ENCODE measurements at regions of chr13 and their contacts with region 1.

Region 1: DNA sequence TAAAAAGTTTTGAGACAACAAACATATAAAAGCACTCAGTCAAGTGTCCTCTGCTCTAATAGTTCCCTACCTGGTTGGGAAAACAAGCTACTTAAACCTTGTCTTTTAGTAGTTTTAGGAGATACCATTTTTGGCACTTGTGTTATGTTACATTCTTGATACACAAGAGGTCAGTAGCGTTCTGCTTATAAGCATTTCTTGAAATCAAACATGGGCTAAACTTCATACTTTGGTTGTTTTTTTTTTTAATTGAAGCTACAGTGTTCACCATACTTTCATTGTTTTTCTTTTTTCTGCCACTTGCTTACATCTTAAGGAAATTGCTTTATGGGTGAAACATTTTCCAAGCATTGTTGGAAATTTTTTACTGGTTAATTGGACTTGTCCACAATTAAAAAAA is 12.9 kb downstream of the NHLRC3 start:
- DNase-seq: peak in 1 of 2 experiments; percentile 41
- H3K4me3 ChIP-seq: no peak overlapping the region
- H3K27ac ChIP-seq: no peak overlapping the region
- H3K4me1 ChIP-seq: peaks cover 8% of the 10 kb centered on the region; the same call in 1 of the 2 replicates
- H3K27me3 ChIP-seq: no peaks in the 10 kb centered on the region
- CTCF ChIP-seq: peak; percentile 72

Region 2: DNA sequence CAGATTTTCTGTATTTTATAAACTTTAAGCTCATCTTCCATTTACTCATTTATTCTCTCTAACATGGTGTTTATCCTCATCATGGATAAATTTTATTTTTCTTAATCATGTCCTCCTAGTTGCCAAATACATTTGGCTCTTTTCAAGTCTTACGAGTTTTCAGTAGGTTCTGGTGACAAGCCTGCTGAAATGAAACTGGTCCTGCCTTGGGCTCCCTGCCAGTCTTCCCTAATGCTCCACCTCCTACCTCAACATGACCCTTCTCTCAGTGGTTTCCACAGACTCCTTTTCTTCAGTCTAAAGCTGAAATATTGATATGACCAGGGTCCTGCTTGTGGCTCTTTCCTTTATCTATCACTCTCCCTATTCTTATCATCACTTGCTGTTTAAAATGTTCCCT is 1262.8 kb before region 1 on chr13:
- CTCF ChIA-PET with region 1: no interaction called
- POLR2A ChIA-PET with region 1: no interaction called
- intact Hi-C with region 1: no loop called
- DNase-seq: no peak
- H3K4me3 ChIP-seq: no peak overlapping the region
- H3K27ac ChIP-seq: no peak overlapping the region
- H3K4me1 ChIP-seq: no peaks in the 10 kb centered on the region
- H3K27me3 ChIP-seq: no peaks in the 10 kb centered on the region
- CTCF ChIP-seq: no peak

Region 3: DNA sequence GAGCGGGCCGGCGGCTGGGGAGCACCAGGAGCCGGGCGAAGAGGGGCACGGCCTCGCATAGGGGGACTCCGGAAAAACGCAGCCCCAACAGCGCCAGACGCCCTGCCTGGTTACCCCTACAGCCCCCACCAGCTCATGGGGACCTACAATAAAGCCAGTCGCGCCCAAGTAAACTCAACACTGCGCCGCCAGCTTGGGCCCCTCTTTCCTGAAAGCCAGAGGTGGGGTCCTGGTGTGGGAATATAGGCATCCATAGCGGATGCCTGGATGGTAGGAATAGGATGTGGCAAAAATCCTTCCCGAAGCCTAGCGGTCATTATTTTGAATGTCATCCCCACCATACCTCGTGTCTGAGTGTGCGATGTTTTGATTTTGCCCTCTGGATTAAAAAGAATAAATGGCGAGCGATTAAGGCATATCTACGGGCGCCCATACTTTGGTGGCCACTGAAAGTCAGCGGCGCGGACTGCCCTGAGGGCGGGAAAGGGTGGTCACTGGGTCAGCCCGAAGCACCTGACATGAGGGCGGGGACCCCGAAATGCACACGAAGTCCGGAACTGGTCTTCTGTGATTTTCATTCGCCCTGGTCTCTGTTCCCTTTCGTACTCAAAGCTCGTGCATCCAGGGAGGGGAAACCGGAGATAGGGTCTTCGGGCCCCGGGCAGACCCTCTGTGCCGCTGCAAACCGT is 13.1 kb before region 1 on chr13 and contains the starts of genes NHLRC3 and PROSER1:
- CTCF ChIA-PET with region 1: interaction called, 12 read pairs
- POLR2A ChIA-PET with region 1: interaction called, 3 read pairs
- intact Hi-C with region 1: no loop called
- DNase-seq: peak; percentile 81 to 88
- H3K4me3 ChIP-seq: peak within 1 kb of the TSS; percentile 90
- H3K27ac ChIP-seq: peak within 1 kb of the TSS; percentile 41
- H3K4me1 ChIP-seq: peaks cover 21% of the 10 kb centered on the region
- H3K27me3 ChIP-seq: no peaks in the 10 kb centered on the region
- CTCF ChIP-seq: no peak
- total RNA-seq, gene NHLRC3: 19.6 and 25.6 TPM in 2 replicates
- total RNA-seq, gene PROSER1: 30.1 and 32.3 TPM in 2 replicates

Region 4: DNA sequence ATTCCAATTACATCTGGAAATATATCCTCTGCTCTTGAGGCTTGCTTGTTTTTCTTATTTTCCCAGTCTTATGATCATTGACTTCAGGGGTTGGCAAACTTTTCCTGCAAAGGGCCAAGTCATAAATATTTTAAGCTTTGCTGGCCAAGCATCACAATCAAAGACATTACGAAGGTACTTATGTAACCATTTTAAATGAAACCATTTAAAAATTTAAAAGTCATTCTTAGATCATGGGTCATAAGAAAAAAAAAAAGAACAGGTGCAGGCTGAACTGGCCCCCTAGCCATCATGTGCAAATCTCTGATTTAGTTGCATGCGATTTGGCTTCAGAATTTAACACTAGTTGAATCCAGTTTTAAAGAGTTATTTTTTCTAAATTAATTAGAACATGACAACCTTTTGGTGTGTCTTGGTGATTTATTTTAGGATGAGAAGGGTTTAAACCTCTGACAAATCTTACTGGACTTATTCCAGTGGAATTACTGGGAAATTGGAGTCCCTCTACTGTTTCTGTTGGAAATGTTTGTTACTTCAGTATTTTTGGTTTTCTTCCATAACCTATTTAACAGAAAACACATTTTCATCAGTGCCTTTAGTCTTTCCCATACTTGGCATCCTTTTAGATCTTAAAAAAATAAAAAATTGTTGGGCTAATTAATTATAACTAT is 135.2 kb after region 1 on chr13:
- CTCF ChIA-PET with region 1: no interaction called
- POLR2A ChIA-PET with region 1: no interaction called
- intact Hi-C with region 1: no loop called
- DNase-seq: no peak
- H3K4me3 ChIP-seq: no peak overlapping the region
- H3K27ac ChIP-seq: no peak overlapping the region
- H3K4me1 ChIP-seq: no peaks in the 10 kb centered on the region
- H3K27me3 ChIP-seq: no peaks in the 10 kb centered on the region
- CTCF ChIP-seq: no peak

Region 5: DNA sequence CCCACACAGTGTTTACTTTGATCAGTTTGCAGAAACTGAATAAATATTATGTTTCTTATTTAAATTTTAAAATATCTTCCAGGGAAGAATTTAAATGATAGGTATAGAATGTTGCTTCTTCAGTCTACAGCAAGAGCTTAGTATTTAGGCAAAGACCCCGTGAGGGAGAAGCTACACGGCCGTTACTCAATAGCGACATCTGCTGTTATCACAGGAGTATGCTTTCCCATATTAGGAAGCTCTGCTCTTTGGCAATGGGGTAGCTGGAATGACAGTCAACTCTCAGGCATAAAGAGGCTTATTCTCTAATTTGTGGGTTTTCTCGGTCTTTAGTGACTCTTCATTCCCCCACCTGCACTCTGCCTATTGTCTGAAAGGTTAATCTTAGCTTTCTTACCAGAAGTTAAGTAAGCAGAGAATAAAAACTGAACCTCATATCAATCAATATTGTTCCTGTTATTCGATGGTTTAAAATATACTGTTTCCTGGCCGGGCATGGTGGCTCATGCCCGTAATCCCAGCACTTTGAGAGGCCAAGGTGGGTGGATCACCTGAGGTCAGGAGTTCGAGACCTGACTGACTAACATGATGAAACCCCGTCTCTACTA is 565.0 kb after region 1 on chr13:
- CTCF ChIA-PET with region 1: interaction called, 3 read pairs
- POLR2A ChIA-PET with region 1: no interaction called
- intact Hi-C with region 1: loop called (anchors 5 kb)
- DNase-seq: no peak
- H3K4me3 ChIP-seq: no peak overlapping the region
- H3K27ac ChIP-seq: no peak overlapping the region
- H3K4me1 ChIP-seq: no peaks in the 10 kb centered on the region; the same call in 1 of the 2 replicates
- H3K27me3 ChIP-seq: no peaks in the 10 kb centered on the region
- CTCF ChIP-seq: peak; percentile 83

Region 6: GRCh38 chr13:39676315-39676876 is 625.2 kb after region 1 on chr13:
- CTCF ChIA-PET with region 1: interaction called, 4 read pairs
- POLR2A ChIA-PET with region 1: no interaction called
- intact Hi-C with region 1: loop called (anchors 1 kb)
- DNase-seq: no peak
- H3K4me3 ChIP-seq: no peak overlapping the region
- H3K27ac ChIP-seq: no peak overlapping the region
- H3K4me1 ChIP-seq: no peaks in the 10 kb centered on the region; the same call in 1 of the 2 replicates
- H3K27me3 ChIP-seq: no peaks in the 10 kb centered on the region
- CTCF ChIP-seq: peak; percentile 71

Region 7: DNA sequence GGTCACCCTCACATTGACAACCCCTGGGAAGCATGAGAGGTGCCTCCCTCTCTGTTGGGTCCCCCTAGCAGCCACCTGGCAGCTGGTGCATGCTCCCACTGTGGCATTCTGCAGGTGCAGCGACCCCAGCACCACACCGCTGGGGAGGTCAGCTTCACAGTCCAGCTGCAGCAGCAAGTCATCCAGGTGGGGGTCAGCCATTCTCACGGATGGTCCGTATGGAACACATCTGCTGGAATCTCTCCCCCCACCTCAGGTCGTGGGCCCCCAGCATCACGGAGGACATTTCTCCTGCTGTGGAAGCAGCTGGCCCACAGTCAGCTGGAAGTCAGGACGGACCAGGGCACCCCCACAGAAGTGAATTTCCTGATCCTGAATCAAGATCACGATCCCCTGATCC is 805.6 kb after region 1 on chr13:
- CTCF ChIA-PET with region 1: no interaction called
- POLR2A ChIA-PET with region 1: interaction called, 17 read pairs
- intact Hi-C with region 1: no loop called
- DNase-seq: no peak
- H3K4me3 ChIP-seq: no peak overlapping the region
- H3K27ac ChIP-seq: no peak overlapping the region
- H3K4me1 ChIP-seq: no peaks in the 10 kb centered on the region
- H3K27me3 ChIP-seq: no peaks in the 10 kb centered on the region
- CTCF ChIP-seq: no peak

Measured in PC-9 (cell line).